SK-N-SH (cell line): ENCODE measurements at regions of chr7 and their contacts with region 1.

Region 1: DNA sequence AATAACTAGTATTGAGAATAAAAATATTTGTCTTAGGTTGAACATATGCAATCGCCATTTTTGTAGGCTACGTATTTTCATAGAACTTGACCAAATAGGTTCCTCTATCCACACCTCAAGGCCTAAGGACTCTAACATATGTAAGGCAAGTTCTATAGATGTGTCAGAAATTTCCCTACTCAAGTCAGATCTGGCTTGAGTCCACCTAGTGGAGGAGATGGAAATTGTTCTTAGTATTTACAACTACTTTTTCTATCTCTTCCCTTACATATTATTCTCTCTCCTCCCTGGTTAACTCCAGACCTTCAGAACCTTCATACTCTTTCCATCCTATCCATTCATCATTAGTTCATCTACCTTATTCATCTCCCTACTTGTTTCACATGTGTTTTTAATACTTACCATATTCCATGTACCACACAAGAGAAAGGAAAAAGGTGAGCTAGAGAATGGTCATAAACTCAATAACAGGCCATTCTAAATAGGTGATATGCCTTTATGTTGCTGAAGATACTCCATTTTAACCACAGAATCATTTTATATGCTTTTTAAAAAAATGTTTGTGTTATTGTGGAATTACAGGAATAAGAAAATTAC is 174.5 kb upstream of the HDAC9 start:
- DNase-seq: peak; percentile 31
- H3K4me3 ChIP-seq: no peak overlapping the region
- H3K27ac ChIP-seq: no peak overlapping the region
- H3K4me1 ChIP-seq: no peaks in the 10 kb centered on the region; a peak in 1 of 4 replicates
- H3K27me3 ChIP-seq: peaks cover 27% of the 10 kb centered on the region; the same call in 1 of the 2 replicates
- CTCF ChIP-seq: peak; percentile 79
- EP300 ChIP-seq: no peak
- RAD21 ChIP-seq: peak; percentile 80

Region 2: DNA sequence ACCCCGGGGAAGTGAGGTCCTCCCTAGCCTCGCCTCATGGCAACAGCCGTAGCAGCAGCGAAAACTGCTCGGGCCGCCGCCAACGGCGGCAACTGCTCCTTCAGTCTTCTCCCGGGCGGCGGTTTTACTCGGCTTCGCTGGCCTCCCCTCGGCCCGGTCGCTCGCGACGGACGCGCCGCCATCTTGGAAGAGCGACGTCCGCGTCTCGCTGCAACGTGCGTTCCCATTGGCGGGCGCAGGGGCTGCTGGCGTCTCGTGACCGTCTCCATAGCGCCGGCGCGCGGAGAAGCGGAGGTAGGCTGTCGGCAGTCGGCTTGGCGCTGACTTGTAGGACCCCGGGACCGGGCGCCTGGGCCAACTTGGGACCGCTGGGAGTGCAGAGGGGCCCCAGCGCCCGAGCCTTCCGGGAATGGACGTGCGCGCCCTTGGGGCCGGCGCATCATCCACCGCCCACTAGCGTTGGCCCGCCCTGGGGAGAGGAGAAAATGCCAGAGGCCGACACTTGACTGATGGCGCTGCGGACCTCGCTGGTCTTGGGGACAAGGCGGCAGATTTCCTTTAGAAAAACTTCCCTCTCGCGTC is 380.7 kb before region 1 on chr7 and contains the start of gene SNX13:
- CTCF ChIA-PET with region 1: no interaction called
- POLR2A ChIA-PET with region 1: no interaction called
- DNase-seq: peak; percentile 98
- H3K4me3 ChIP-seq: peak within 1 kb of the TSS; percentile 87 to 100
- H3K27ac ChIP-seq: peak within 1 kb of the TSS; percentile 85 to 95
- H3K4me1 ChIP-seq: peaks cover 12 to 17% of the 10 kb centered on the region in 2 experiments; a peak in 3 of 4 replicates
- H3K27me3 ChIP-seq: no peaks in the 10 kb centered on the region
- CTCF ChIP-seq: peak; percentile 46
- EP300 ChIP-seq: peak in 1 of 2 experiments; percentile 23; a peak in 1 of 4 replicates
- RAD21 ChIP-seq: peak; percentile 10; the same call in 1 of the 2 replicates
- polyA plus RNA-seq, gene SNX13: 8.3 and 13.0 TPM in 2 replicates

Region 3: DNA sequence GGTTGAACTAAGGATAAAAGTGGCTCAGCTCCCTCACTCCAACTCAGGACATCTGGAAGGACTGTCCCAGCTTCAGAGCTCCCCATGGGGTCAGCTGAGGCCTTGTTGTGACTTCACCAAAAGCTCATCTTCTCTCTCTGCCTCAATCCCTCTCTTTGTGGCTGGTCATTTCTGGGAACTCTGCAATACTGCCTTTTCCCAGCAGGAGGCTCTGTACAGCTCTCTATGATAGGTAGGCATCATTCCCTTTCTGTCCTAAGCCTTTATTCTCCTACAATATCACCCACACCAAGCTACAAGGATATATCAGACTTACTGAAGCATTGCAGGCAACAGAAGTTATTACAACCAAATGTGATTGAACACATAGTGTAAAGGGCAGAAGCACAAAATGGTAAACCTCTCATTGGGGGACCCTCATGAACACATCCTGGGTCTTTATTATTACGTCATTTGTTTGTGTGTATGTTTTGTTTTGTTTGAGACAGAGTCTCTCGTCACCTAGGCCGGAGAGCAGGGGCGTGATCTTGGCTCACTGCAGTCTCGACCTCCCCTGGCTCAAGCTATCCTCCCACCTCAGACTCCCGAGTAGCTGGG is 256.7 kb before region 1 on chr7:
- CTCF ChIA-PET with region 1: interaction called, 35 read pairs
- POLR2A ChIA-PET with region 1: no interaction called
- DNase-seq: peak; percentile 26
- H3K4me3 ChIP-seq: no peak overlapping the region
- H3K27ac ChIP-seq: no peak overlapping the region
- H3K4me1 ChIP-seq: no peaks in the 10 kb centered on the region
- H3K27me3 ChIP-seq: peaks cover 22% of the 10 kb centered on the region; the same call in 1 of the 2 replicates
- CTCF ChIP-seq: peak; percentile 52
- EP300 ChIP-seq: no peak
- RAD21 ChIP-seq: peak; percentile 75

Region 4: GRCh38 chr7:18288322-18289037 is 32.6 kb before region 1 on chr7:
- CTCF ChIA-PET with region 1: interaction called, 10 read pairs
- POLR2A ChIA-PET with region 1: no interaction called
- DNase-seq: no peak
- H3K4me3 ChIP-seq: no peak overlapping the region
- H3K27ac ChIP-seq: no peak overlapping the region
- H3K4me1 ChIP-seq: peaks cover 0 to 2% of the 10 kb centered on the region in 2 experiments; a peak in 2 of 4 replicates
- H3K27me3 ChIP-seq: no peaks in the 10 kb centered on the region; the same call in 1 of the 2 replicates
- CTCF ChIP-seq: no peak
- EP300 ChIP-seq: no peak
- RAD21 ChIP-seq: no peak

Region 5: GRCh38 chr7:18305866-18306265 is 15.2 kb before region 1 on chr7:
- CTCF ChIA-PET with region 1: interaction called, 32 read pairs
- POLR2A ChIA-PET with region 1: no interaction called
- DNase-seq: no peak
- H3K4me3 ChIP-seq: no peak overlapping the region
- H3K27ac ChIP-seq: no peak overlapping the region
- H3K4me1 ChIP-seq: no peaks in the 10 kb centered on the region
- H3K27me3 ChIP-seq: peaks cover 23% of the 10 kb centered on the region
- CTCF ChIP-seq: no peak
- EP300 ChIP-seq: no peak
- RAD21 ChIP-seq: no peak

Region 6: DNA sequence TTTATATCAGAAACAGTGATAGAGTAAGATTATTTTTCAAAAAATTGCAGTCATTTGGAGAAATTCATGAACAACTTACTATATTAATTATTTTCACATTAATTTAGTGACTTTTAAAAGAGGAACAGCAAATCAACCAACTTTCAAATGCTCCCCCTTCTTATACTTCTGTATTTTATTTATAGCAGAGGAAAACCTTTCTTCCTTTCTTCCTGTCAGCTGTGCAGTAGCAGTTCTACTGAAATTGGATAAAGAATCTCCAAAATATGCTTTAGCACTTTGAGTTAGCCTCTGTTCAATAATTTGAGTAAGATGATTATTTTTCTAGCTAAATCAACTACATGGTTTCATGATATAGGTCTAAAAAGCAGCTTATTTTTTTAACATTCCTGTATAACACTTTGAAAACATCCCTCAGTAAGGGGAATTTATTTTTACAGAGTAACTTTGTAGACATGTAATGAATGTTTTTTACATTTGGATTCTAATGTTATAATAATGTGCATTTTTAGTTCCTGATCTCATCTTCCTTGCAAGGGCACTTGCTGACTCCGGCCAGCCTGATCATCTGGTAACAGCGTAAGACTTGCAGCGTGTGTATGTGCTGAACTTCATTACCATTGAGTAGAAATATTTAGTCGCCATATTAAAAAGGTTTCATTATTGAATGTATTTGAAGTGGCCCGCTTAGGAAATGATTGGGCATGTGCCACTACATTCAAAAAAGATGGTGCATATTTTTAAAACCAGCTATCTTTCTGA is 16.2 kb after region 1 on chr7:
- CTCF ChIA-PET with region 1: interaction called, 15 read pairs
- POLR2A ChIA-PET with region 1: no interaction called
- DNase-seq: no peak
- H3K4me3 ChIP-seq: no peak overlapping the region
- H3K27ac ChIP-seq: no peak overlapping the region
- H3K4me1 ChIP-seq: no peaks in the 10 kb centered on the region
- H3K27me3 ChIP-seq: no peaks in the 10 kb centered on the region; the same call in 1 of the 2 replicates
- CTCF ChIP-seq: no peak
- EP300 ChIP-seq: no peak
- RAD21 ChIP-seq: no peak

Region 7: DNA sequence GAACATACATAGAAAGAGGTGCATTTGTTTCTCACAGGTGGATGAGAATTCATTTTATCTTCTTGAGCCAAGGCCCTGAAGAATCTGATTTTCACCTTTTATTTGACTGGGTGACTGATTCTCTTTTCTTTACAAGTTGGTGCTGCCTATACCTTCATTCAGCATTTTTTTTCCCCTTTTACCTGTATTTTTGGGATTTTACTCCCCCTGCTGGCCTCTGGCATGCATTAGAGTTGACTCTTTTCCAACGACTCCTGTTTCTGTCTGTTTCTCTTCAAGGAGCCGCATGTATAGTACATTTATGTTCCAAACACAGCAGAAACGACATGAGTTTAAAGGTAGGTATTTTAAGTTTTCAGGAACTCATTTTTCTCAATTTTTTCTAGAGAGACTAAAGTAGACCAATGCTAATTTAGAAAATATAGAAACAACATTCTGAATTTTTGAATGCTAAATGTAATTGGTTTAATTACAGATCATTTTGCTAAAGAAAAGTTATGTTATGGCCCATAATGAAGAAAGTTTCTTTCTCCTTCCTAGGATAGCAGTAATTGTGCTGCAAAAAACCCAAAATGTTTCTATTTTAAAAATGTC is 24.7 kb after region 1 on chr7:
- CTCF ChIA-PET with region 1: interaction called, 19 read pairs
- POLR2A ChIA-PET with region 1: no interaction called
- DNase-seq: peak; percentile 21
- H3K4me3 ChIP-seq: no peak overlapping the region; a peak in 1 of 4 replicates
- H3K27ac ChIP-seq: no peak overlapping the region
- H3K4me1 ChIP-seq: no peaks in the 10 kb centered on the region; a peak in 1 of 4 replicates
- H3K27me3 ChIP-seq: no peaks in the 10 kb centered on the region; the same call in 1 of the 2 replicates
- CTCF ChIP-seq: peak; percentile 99
- EP300 ChIP-seq: no peak
- RAD21 ChIP-seq: peak; percentile 95

Region 8: GRCh38 chr7:18610331-18610948 is 289.4 kb after region 1 on chr7:
- CTCF ChIA-PET with region 1: no interaction called
- POLR2A ChIA-PET with region 1: no interaction called
- DNase-seq: peak; percentile 11
- H3K4me3 ChIP-seq: no peak overlapping the region; a peak in 1 of 4 replicates
- H3K27ac ChIP-seq: no peak overlapping the region
- H3K4me1 ChIP-seq: peaks cover 0 to 4% of the 10 kb centered on the region in 2 experiments; a peak in 2 of 4 replicates
- H3K27me3 ChIP-seq: no peaks in the 10 kb centered on the region
- CTCF ChIP-seq: peak; percentile 66
- EP300 ChIP-seq: no peak
- RAD21 ChIP-seq: peak; percentile 37